CD14-positive monocyte (primary cell): ENCODE measurements at regions of chr20 and their contacts with region 1.

Region 1: DNA sequence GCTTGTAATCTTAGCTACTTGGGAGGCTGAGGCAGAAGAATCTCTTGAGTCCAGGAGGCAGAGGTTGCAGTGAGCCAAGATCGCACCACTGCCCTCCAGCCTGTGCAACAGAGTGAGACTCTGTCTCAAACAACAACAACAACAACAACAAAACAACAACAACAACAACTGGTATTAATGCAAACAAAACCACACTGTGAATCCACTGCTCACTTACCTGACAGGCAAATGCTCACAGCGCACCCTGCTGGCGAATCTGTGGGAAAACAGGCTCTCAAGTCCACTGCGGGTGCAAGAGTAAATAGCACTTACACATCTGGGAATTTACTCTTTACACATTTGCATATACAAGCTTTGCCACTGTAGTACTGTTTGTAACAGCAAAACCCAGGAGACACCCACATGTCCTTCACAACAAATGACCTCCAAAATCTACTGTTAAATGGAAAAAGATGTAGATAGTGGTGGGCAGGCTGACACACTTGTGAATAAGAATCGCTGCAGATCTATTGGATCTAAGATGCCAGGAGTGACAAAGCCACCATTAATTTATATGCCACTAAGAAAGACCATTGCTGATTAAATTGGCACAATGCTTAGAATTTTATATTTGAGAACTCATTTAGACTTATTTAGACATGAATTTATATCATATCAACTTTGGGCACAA is 29.3 kb downstream of the NSFL1C start:
- DNase-seq: peak; percentile 69 to 84 (median 72)
- H3K4me3 ChIP-seq: no peak overlapping the region
- H3K4me3 Mint-ChIP-seq: no peak overlapping the region
- H3K27ac ChIP-seq: no peak overlapping the region
- H3K27ac Mint-ChIP-seq: peak overlapping the region in 4 of 7 donors; percentile 15 to 77 (median 40)
- H3K4me1 ChIP-seq: peaks cover 21% of the 10 kb centered on the region in 2 donors
- H3K4me1 Mint-ChIP-seq: peaks cover 32% of the 10 kb centered on the region
- H3K27me3 ChIP-seq: peaks cover 2 to 6% of the 10 kb centered on the region in 2 donors
- H3K27me3 Mint-ChIP-seq: peaks cover 0 to 10% (median 8%) of the 10 kb centered on the region in 3 donors
- CTCF ChIP-seq: peak; percentile 87

Region 2: GRCh38 chr20:1313236-1313964 is 124.0 kb before region 1 on chr20:
- intact Hi-C with region 1: loop called (anchors 1 to 5 kb)
- DNase-seq: peak; percentile 44 to 71 (median 64)
- H3K4me3 ChIP-seq: no peak overlapping the region
- H3K4me3 Mint-ChIP-seq: no peak overlapping the region
- H3K27ac ChIP-seq: no peak overlapping the region
- H3K27ac Mint-ChIP-seq: no peak overlapping the region
- H3K4me1 ChIP-seq: peaks cover 6 to 13% of the 10 kb centered on the region in 2 donors
- H3K4me1 Mint-ChIP-seq: peaks cover 8% of the 10 kb centered on the region
- H3K27me3 ChIP-seq: no peaks in the 10 kb centered on the region
- H3K27me3 Mint-ChIP-seq: peaks cover 0 to 6% (median 0%) of the 10 kb centered on the region in 3 donors
- CTCF ChIP-seq: peak; percentile 100

Region 3: DNA sequence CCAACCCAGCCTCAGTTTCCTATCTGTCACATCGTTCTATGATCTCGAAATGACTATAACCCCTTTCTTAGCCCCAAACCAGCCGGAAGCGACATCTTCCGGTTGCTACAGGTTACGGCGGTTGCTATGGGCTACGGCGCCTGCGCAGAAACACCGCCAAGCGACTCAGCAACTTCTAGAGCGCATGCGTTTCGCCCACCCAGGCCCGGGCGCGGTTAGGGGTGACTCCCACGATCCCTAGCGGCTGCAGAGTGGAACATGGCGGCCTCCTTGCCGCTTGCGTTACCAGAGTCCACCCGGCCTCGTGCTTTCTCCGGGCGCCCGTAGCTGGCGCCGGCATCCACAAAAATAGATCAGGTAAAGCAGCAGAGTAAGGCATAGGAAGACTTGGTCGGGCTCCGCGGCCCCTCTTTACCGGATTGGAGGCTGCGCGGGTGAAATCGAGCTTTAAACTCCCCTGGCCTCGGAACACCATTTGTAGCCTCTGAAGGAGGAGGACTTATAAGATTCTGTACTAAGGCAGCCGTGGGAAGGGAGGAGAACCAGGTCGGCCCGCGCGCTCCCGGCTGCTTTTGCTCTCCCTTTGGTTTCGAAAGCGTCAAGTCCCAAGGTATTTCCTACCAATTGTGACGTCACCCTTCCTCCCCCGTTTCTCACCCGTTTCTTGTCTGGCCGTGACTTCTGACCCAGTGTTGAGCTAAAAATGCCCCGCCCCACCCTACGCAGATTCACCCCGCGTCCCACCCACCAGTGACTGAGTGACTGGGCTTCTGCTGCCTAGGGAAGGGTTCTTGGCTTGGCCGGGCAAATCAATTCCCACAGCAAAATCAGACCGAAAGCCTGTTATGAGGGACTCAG is 112.0 kb before region 1 on chr20:
- intact Hi-C with region 1: loop called in 1 of 2 experiments (anchors 2 kb)
- DNase-seq: peak; percentile 98 to 99 (median 99)
- H3K4me3 ChIP-seq: peak overlapping the region; percentile 66 to 85 (median 75)
- H3K4me3 Mint-ChIP-seq: no peak overlapping the region
- H3K27ac ChIP-seq: peak overlapping the region; percentile 92 to 99
- H3K27ac Mint-ChIP-seq: no peak overlapping the region
- H3K4me1 ChIP-seq: peaks cover 16 to 30% of the 10 kb centered on the region in 2 donors
- H3K4me1 Mint-ChIP-seq: peaks cover 35% of the 10 kb centered on the region
- H3K27me3 ChIP-seq: no peaks in the 10 kb centered on the region
- H3K27me3 Mint-ChIP-seq: peaks cover 0 to 3% (median 0%) of the 10 kb centered on the region in 3 donors
- CTCF ChIP-seq: no peak

Region 4: GRCh38 chr20:1375515-1375914 is 61.9 kb before region 1 on chr20:
- intact Hi-C with region 1: loop called (anchors 2 to 5 kb)
- DNase-seq: peak; percentile 42 to 74 (median 74)
- H3K4me3 ChIP-seq: peak overlapping the region in 2 of 3 experiments; percentile 11 to 35
- H3K4me3 Mint-ChIP-seq: peak overlapping the region in 1 of 2 donors; percentile 82
- H3K27ac ChIP-seq: peak overlapping the region; percentile 57 to 83
- H3K27ac Mint-ChIP-seq: peak overlapping the region; percentile 90 to 97 (median 92)
- H3K4me1 ChIP-seq: peaks cover 61 to 63% of the 10 kb centered on the region in 2 donors
- H3K4me1 Mint-ChIP-seq: peaks cover 74% of the 10 kb centered on the region
- H3K27me3 ChIP-seq: no peaks in the 10 kb centered on the region
- H3K27me3 Mint-ChIP-seq: peaks cover 0 to 2% (median 2%) of the 10 kb centered on the region in 3 donors
- CTCF ChIP-seq: no peak

Region 5: GRCh38 chr20:1381753-1382591 is 55.4 kb before region 1 on chr20:
- intact Hi-C with region 1: loop called (anchors 2 to 5 kb)
- DNase-seq: no peak
- H3K4me3 ChIP-seq: no peak overlapping the region
- H3K4me3 Mint-ChIP-seq: no peak overlapping the region
- H3K27ac ChIP-seq: no peak overlapping the region
- H3K27ac Mint-ChIP-seq: peak overlapping the region in 5 of 7 donors; percentile 15 to 80 (median 57)
- H3K4me1 ChIP-seq: peaks cover 46 to 69% of the 10 kb centered on the region in 2 donors
- H3K4me1 Mint-ChIP-seq: peaks cover 93% of the 10 kb centered on the region
- H3K27me3 ChIP-seq: no peaks in the 10 kb centered on the region
- H3K27me3 Mint-ChIP-seq: peaks cover 0 to 6% (median 0%) of the 10 kb centered on the region in 3 donors
- CTCF ChIP-seq: no peak

Region 6: DNA sequence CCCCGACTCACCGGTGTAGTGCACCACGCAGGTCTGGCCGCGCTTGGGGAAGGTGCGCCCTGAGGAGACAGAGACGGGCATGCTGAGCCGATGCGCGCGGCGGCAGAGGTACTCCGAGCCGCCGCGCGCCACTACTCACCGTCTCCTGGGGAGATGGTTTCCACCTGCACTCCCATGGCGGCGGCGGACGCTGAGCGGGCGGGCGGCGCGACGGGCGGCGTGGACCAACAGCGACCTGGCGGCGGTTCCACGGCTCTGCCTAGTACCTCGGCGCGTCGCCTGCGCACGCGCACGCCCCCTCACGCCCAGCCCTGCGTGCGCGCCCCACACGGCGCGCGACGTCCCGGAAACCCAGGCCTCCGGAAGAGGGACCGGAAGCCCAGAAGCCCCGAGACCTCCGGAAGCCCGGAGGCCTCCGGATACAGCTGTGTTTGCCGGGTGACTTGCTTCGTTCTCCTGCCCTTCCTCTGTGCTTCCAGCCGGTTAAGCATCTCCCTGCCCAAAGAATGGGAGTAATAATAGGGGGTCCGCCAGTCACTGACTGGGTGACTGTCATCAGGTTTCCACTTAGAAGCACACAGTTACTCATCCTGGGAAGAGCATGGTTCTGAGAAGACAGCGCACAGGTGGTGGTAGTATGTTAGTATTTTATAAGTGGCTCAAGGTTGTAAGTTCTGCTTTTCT is 44.4 kb before region 1 on chr20 and contains the start of gene FKBP1A:
- intact Hi-C with region 1: loop called in 1 of 2 experiments (anchors 5 kb)
- DNase-seq: peak; percentile 85 to 91 (median 86)
- H3K4me3 ChIP-seq: peak within 1 kb of the TSS; percentile 89 to 98 (median 98)
- H3K4me3 Mint-ChIP-seq: peak within 1 kb of the TSS; percentile 92 to 96
- H3K27ac ChIP-seq: peak within 1 kb of the TSS; percentile 76 to 85
- H3K27ac Mint-ChIP-seq: peak within 1 kb of the TSS; percentile 93 to 98 (median 96)
- H3K4me1 ChIP-seq: peaks cover 49 to 53% of the 10 kb centered on the region in 2 donors
- H3K4me1 Mint-ChIP-seq: peaks cover 62% of the 10 kb centered on the region
- H3K27me3 ChIP-seq: peaks cover 0 to 6% of the 10 kb centered on the region in 2 donors
- H3K27me3 Mint-ChIP-seq: peaks cover 0 to 8% (median 8%) of the 10 kb centered on the region in 3 donors
- CTCF ChIP-seq: no peak
- polyA plus RNA-seq, gene FKBP1A: 155 to 268 (median 194) TPM

Region 7: GRCh38 chr20:1478576-1478975 is 41.2 kb after region 1 on chr20:
- intact Hi-C with region 1: no loop called
- DNase-seq: peak in 2 of 3 donors; percentile 10 to 60
- H3K4me3 ChIP-seq: no peak overlapping the region
- H3K4me3 Mint-ChIP-seq: no peak overlapping the region
- H3K27ac ChIP-seq: peak overlapping the region in 1 of 2 donors; percentile 62
- H3K27ac Mint-ChIP-seq: peak overlapping the region; percentile 38 to 81 (median 43)
- H3K4me1 ChIP-seq: peaks cover 53 to 89% of the 10 kb centered on the region in 2 donors
- H3K4me1 Mint-ChIP-seq: peaks cover 88% of the 10 kb centered on the region
- H3K27me3 ChIP-seq: no peaks in the 10 kb centered on the region
- H3K27me3 Mint-ChIP-seq: peaks cover 0 to 3% (median 0%) of the 10 kb centered on the region in 3 donors
- CTCF ChIP-seq: no peak